Activated CD4-positive, alpha-beta T cell treated with anti-CD3 and anti-CD28 coated beads for 36 hours (primary cell): ENCODE measurements at regions of chr12 and their contacts with region 1.

Region 1: DNA sequence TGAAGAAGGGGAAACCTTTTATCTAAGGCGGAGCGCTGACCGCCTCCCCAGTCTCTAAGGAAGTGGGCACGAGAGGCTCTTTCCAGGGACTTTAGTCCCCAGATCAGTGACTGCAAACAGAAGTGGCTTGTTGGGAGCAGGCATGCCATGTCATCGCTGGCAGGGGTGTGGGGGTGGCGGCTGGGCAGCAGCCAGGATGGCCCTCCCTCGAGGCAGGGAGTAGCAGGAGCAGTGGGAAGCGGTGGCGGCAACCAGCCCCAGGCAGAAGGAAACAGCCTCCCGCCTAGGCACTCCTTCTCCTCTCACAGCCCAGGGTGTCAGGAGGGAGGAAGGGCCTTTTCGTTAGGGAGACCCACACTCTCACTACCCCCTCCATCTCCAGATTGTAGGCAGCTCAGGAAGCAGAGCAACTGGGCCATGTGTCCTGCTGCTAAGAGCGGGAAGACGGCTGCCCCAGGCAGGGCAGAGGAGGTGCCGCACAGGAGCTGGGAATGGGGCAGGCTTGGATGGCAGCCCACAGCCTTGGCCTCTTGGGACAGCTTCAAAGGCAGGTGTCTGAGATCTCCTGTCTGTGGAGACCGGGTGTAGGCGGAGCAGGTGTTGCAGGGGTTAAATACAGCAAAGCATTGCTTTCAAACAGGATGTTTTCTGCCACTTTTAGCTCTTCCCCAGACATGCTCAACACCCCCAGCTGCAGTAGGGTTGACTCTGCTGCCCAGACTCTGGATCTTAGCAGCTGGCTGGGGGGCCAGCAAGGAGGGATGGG is 21.8 kb downstream of the VDR start:
- DNase-seq: peak; percentile 70
- ATAC-seq: peak; percentile 14
- H3K4me3 Mint-ChIP-seq: peak overlapping the region; percentile 78
- H3K27ac Mint-ChIP-seq: peak overlapping the region; percentile 97
- H3K4me1 Mint-ChIP-seq: peaks cover 81% of the 10 kb centered on the region
- H3K27me3 Mint-ChIP-seq: no peaks in the 10 kb centered on the region

Region 2: DNA sequence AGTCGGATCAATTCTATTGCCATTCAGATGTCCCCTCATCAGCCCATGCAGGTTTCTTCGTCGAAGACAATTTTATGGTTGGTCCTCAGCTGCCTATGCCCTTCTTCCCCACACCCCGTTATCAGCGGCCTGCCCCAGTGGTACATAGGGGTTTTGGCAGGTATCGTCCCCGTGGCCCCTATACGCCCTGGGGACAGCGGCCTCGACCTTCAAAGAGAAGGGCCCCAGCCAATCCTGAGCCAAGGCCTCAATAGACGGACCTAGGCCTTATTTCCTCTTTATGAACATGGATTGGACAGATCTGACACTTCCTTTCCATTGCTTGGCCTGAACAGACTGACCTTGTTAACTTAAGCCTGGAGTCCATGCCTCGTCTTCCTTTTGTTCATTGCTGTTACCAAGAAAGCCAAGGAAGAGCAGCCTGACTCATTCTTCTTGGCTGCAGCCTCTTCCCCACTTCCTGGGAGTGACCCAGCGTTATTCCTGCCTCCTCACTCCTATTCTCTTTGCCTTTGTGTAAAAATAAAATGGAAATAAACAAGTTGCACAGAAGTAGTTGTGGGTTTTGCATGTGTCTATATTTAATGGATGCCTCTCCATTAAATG is 646.8 kb before region 1 on chr12:
- CTCF ChIA-PET with region 1: no interaction called
- POLR2A ChIA-PET with region 1: no interaction called
- intact Hi-C with region 1: no loop called
- DNase-seq: no peak
- ATAC-seq: no peak
- H3K4me3 Mint-ChIP-seq: no peak overlapping the region
- H3K27ac Mint-ChIP-seq: peak overlapping the region; percentile 76
- H3K4me1 Mint-ChIP-seq: peaks cover 46% of the 10 kb centered on the region
- H3K27me3 Mint-ChIP-seq: no peaks in the 10 kb centered on the region

Region 3: DNA sequence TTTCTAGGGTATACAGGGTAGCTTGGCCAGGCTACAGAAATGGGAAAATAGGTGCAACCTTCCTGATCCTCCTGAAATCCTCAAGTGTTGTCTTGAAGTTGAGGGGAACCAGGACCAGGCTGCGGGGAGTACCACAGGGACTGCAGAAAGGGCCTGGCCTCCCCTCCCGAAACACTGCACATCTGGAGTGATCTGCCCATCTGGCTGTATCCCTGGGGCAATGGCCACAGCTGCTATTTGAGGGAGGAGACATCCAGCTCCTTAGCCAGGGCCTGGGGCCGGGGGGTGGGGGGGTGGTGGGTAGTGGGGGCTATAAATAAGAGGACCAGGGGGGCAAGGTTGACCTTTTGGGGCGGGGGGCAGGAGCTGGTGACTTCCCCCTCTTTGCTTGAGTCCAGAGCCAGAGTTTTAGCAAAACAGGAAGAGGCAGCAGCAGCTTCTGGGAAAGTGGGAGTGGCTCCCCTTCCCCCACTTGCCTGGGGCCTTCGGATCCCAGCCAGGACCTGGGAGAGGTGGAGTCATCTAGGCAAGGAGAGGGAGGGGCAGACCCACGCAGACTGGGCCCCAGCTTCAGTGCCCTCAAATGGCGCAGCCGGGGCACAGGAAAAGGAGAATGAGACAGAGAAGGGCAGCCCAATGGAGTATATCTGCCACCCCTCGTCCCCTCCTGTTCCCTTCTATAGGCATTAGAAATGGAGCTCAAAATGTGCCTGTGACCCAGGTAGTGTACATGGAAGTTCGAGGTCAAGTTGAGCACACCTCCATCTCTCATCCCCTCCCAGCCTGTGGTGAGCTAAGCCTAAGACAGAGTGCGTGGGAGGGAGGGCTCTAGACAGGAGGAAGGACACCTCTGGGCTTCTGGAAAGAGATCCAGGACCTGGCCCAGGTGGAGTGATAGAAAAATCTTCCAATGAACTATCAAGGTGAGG is 54.1 kb before region 1 on chr12:
- CTCF ChIA-PET with region 1: interaction called, 11 read pairs
- POLR2A ChIA-PET with region 1: interaction called, 14 read pairs
- intact Hi-C with region 1: loop called in 1 of 2 experiments (anchors 1 kb)
- DNase-seq: peak; percentile 55
- ATAC-seq: no peak
- H3K4me3 Mint-ChIP-seq: peak overlapping the region; percentile 71
- H3K27ac Mint-ChIP-seq: peak overlapping the region; percentile 92
- H3K4me1 Mint-ChIP-seq: peaks cover 91% of the 10 kb centered on the region
- H3K27me3 Mint-ChIP-seq: no peaks in the 10 kb centered on the region

Region 4: DNA sequence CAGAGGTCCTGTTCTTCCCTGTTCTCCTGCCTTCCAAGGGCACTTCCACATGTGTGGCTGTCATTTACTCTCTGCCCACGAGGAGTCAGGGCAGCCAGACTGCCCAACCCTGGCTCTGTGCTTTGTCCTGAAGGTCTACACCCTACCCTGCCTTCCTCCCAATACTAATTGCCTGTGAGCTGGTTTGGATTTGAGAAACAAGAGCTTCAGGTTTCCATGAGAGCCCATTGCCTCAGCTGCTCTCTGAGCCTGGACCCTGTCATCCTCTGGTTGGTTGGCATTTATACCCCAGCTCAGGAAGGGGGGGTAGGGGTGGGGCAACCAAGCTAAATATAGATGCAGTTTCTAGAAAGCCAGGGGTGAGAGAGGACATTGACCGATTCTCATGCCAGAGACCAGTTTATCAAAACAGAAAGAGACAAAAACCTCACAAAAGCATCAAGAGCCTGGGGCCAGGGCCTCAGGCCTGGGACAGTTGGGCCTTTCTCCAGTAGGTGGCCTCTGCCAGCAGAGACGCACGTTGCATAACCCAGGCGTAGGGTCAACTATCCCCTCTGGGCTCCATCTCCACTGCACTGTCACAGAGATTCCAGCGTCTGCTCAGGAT is 12.7 kb before region 1 on chr12:
- CTCF ChIA-PET with region 1: interaction called, 24 read pairs
- POLR2A ChIA-PET with region 1: interaction called, 69 read pairs
- intact Hi-C with region 1: loop called in 1 of 2 experiments (anchors 1 kb)
- DNase-seq: no peak
- ATAC-seq: no peak
- H3K4me3 Mint-ChIP-seq: no peak overlapping the region
- H3K27ac Mint-ChIP-seq: peak overlapping the region; percentile 85
- H3K4me1 Mint-ChIP-seq: peaks cover 66% of the 10 kb centered on the region
- H3K27me3 Mint-ChIP-seq: no peaks in the 10 kb centered on the region

Region 5: DNA sequence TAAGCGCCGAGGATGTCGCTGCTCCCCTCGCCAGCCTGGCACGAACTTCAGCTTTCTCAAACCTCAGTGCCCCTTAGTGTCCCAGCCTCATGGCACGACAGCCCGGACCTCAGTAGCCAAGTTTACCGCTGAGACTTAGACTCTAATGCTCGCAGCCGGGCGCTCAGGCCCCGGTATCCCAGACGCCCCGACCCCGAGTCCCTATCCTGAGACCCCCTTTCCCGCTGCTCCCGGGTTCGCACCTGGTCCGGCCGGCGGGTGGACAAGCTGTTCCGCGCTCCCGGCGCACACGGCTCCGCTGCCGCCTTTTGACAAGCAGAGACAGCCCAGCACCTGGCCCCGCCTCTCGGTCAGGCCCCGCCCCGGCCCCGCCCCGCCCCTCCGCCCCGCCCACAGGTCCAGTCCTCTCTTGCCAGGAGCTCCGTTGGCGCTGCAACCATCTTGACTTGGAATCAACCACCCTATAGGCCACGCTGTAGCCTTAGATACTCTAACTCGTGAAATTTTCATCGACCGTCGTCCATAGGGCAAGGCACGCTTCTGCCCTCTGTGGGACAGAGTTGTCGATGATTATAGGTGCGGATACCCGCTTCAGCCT is 21.8 kb after region 1 on chr12 and contains the start of gene VDR:
- CTCF ChIA-PET with region 1: interaction called, 13 read pairs
- POLR2A ChIA-PET with region 1: interaction called, 24 read pairs
- intact Hi-C with region 1: loop called (anchors 1 kb)
- DNase-seq: peak; percentile 88
- ATAC-seq: peak; percentile 76
- H3K4me3 Mint-ChIP-seq: peak within 1 kb of the TSS; percentile 94
- H3K27ac Mint-ChIP-seq: peak within 1 kb of the TSS; percentile 92
- H3K4me1 Mint-ChIP-seq: peaks cover 45% of the 10 kb centered on the region
- H3K27me3 Mint-ChIP-seq: peaks cover 20% of the 10 kb centered on the region
- total RNA-seq, gene VDR: 108 to 124 TPM

Region 6: DNA sequence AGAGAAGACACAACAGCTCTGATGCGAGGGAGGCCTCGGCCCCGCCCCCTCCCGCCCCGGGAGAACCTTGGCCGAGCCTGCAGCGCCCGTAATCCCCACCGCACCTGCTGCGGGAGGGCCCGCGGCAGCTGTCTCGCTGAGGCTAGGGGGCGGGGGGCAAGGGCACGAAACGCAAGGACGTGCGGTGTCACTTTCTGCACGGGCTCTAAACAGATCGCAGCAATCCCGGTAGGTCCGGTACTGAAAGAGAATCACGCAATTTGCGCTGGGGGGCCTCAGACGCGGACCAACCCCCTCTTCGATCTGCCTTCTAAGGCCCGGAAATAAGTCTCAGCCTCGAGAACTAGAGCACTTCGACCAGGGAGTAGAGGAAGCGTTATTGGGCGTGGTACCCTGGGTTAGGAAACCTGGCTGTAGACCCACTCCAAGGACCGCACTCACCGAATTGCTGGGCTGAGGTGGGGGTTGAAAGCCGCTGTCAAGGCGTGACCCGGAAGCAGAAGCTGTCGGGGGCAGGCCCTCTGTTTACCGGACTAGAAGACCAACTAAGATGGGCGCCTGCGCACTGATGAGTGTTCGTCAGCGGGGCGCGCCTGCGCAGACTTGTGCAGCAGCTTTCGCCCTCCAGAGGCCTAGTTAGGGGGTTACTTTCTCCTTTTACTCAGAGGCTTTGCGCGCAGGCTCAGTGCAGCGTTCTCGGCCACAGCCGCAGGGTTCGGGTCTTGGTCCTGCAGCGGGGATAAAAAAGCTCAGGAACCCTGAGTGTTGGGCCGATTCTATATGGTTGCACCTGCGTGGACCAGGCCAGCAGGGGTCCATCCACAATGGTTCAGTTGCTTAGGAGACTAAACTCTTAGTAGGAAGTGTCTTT is 274.3 kb after region 1 on chr12 and contains the start of gene ASB8:
- CTCF ChIA-PET with region 1: no interaction called
- POLR2A ChIA-PET with region 1: interaction called, 8 read pairs
- intact Hi-C with region 1: loop called in 1 of 2 experiments (anchors 1 kb)
- DNase-seq: peak; percentile 100
- ATAC-seq: peak; percentile 96
- H3K4me3 Mint-ChIP-seq: peak within 1 kb of the TSS; percentile 88
- H3K27ac Mint-ChIP-seq: peak within 1 kb of the TSS; percentile 94
- H3K4me1 Mint-ChIP-seq: peaks cover 40% of the 10 kb centered on the region
- H3K27me3 Mint-ChIP-seq: no peaks in the 10 kb centered on the region
- total RNA-seq, gene ASB8: 28.8 to 33.0 TPM